HepG2 (cell line): ENCODE measurements at regions of chrX and their contacts with region 1.

Region 1: DNA sequence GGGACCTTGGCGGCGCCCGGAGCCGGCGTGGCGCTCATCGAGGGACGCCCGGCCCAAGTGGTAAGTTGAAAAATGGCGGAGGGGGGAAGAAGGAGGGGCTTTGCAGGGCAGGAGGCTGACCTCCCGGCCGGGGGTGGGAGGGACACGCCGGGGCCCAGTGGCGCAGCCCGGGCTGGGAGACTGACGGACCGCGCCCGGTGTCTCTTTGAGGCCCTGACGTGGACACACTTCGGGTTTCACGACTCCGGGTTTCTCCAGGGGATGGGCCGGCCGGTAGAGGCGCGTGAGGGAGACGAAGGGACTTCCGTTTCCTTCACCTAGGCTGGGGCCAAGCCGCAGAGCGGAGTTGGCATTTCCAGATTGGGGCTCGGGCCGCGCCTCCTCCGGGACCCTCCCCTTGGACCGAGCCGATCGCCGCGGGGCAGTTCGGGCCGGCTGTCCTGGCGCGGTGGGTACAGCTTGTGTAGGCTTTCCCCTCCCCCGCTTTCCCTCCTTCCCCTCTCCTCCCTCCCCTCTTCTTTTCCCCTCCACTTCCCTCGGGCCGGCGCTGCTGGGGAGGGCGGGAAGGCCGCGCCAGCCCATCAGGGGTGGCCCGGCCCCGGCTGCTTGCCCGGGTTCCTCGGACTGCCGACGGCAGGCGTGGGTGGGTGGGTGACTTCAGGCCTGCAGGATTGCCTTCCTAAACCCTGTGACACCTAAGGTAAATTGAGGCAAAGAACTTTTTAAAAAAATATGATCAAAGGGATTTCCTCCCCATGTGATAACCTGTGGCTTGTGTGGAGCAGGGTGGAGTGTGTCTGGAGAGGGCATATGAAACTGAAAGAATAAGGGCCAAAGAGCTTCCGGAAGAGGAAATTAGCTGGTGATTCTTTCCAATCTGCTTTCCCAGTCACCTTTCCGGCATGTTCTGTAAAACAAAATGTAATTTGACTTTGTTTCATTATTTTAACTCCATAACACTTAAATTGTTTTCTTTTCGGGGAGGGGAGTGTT is at the start of gene XIAP:
- DNase-seq: peak; percentile 82
- ATAC-seq: peak; percentile 96
- H3K4me3 ChIP-seq: peak within 1 kb of the TSS; percentile 73 to 76 (median 76)
- H3K27ac ChIP-seq: peak within 1 kb of the TSS; percentile 96
- H3K4me1 ChIP-seq: peaks cover 9% of the 10 kb centered on the region; the same call in 1 of the 2 replicates
- H3K27me3 ChIP-seq: no peaks in the 10 kb centered on the region
- CTCF ChIP-seq: peak; percentile 2; the same call in 1 of the 2 replicates
- EP300 ChIP-seq: no peak
- POLR2A ChIP-seq: peak; percentile 65 to 68
- RAD21 ChIP-seq: no peak
- total RNA-seq, gene XIAP: 29.5 and 53.0 TPM in 2 replicates

Region 2: GRCh38 chrX:123771449-123772064 is 88.6 kb before region 1 on chrX:
- CTCF ChIA-PET with region 1: no interaction called
- POLR2A ChIA-PET with region 1: interaction called, 11 read pairs
- in situ Hi-C with region 1: no loop called
- intact Hi-C with region 1: no loop called
- DNase-seq: peak; percentile 37
- ATAC-seq: peak; percentile 81
- H3K4me3 ChIP-seq: peak overlapping the region in 1 of 3 experiments; percentile 16; a peak in 1 of 6 replicates
- H3K27ac ChIP-seq: peak overlapping the region; percentile 68
- H3K4me1 ChIP-seq: peaks cover 32% of the 10 kb centered on the region
- H3K27me3 ChIP-seq: no peaks in the 10 kb centered on the region
- CTCF ChIP-seq: no peak
- EP300 ChIP-seq: no peak
- POLR2A ChIP-seq: no peak
- RAD21 ChIP-seq: no peak

Region 3: GRCh38 chrX:123943488-123943887 is 83.3 kb after region 1 on chrX:
- CTCF ChIA-PET with region 1: no interaction called
- POLR2A ChIA-PET with region 1: no interaction called
- in situ Hi-C with region 1: no loop called
- intact Hi-C with region 1: no loop called
- DNase-seq: no peak
- ATAC-seq: no peak
- H3K4me3 ChIP-seq: no peak overlapping the region
- H3K27ac ChIP-seq: no peak overlapping the region
- H3K4me1 ChIP-seq: peaks cover 6% of the 10 kb centered on the region; the same call in 1 of the 2 replicates
- H3K27me3 ChIP-seq: no peaks in the 10 kb centered on the region
- CTCF ChIP-seq: no peak
- EP300 ChIP-seq: no peak
- POLR2A ChIP-seq: no peak
- RAD21 ChIP-seq: no peak

Region 4: DNA sequence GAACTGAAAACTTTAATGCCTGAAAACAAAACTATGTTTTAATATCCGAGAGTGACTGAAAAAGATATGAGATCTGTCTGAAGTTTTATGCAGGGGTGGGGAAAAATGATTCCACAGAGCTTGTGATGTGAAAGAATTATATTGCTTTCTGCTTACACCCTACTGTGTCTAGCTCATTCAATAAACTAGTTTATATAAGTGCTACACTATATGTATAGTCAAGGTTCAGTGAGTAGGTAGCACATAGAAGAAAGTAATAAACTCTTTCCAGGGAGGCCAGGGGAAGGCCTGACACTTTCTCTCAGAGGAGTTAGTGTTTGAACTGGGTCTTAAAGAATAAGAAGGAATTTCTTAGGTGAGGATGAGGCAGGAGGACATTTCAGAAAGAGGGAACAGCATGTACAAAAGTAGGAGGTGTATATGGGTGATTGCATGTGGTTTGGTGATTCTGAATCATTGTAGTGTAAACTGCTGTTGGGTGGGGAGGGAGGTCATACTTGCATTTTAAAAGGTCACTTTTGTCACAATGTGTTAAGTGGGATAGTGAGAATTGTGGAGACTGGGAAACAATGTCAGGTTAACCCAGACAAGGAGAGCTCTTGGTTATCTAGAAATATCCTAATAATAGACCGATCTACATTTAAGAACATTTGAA is 447.2 kb after region 1 on chrX:
- CTCF ChIA-PET with region 1: no interaction called
- POLR2A ChIA-PET with region 1: no interaction called
- in situ Hi-C with region 1: no loop called
- intact Hi-C with region 1: no loop called
- DNase-seq: no peak
- ATAC-seq: no peak
- H3K4me3 ChIP-seq: no peak overlapping the region
- H3K27ac ChIP-seq: no peak overlapping the region
- H3K4me1 ChIP-seq: no peaks in the 10 kb centered on the region
- H3K27me3 ChIP-seq: no peaks in the 10 kb centered on the region
- CTCF ChIP-seq: no peak
- EP300 ChIP-seq: no peak
- POLR2A ChIP-seq: no peak
- RAD21 ChIP-seq: no peak